ENCODE measurements at regions of chr6 and their contacts with region 1.

Region 1: DNA sequence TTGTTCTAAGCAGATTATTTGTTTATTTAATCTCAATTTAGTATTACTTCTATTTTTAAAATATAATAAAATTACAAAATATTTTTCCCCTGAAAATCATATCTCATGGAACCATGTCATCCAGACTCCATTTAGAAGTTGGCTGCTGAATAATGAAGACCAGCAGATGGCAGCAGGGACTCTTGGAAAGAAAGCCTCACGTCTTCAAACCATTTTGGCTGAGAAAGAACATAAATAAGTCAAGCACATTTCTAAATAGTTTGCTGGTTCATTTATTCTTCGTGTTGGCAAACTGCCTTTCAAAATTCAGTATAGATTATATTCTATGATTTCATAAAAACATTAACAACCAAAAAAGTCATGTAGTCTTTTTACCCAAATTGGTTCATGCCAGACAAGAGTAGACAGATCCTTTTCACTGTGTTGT is 71.7 kb downstream of the RCAN2 start:
- DNase-seq: peak; percentile 8
- ATAC-seq: peak; percentile 60
- H3K4me3 ChIP-seq: no peak overlapping the region
- H3K27ac ChIP-seq: no peak overlapping the region
- H3K4me1 ChIP-seq: no peaks in the 10 kb centered on the region
- H3K27me3 ChIP-seq: no peaks in the 10 kb centered on the region
- CTCF ChIP-seq: peak; percentile 54 to 65 (median 59); a peak in 5 of 6 replicates
- EP300 ChIP-seq: no peak
- POLR2A ChIP-seq: no peak
- RAD21 ChIP-seq: peak; percentile 88

Region 2: GRCh38 chr6:46381579-46381978 is 38.0 kb before region 1 on chr6:
- CTCF ChIA-PET with region 1: no interaction called
- POLR2A ChIA-PET with region 1: no interaction called
- RAD21 ChIA-PET with region 1: no interaction called
- SMC1A ChIA-PET with region 1: no interaction called
- in situ Hi-C with region 1: no loop called
- intact Hi-C with region 1: no loop called
- DNase-seq: no peak
- ATAC-seq: no peak
- H3K4me3 ChIP-seq: no peak overlapping the region
- H3K27ac ChIP-seq: no peak overlapping the region
- H3K4me1 ChIP-seq: peaks cover 14% of the 10 kb centered on the region
- H3K27me3 ChIP-seq: no peaks in the 10 kb centered on the region; a peak in 2 of 4 replicates
- CTCF ChIP-seq: no peak
- EP300 ChIP-seq: no peak
- POLR2A ChIP-seq: no peak
- RAD21 ChIP-seq: no peak

Region 3: DNA sequence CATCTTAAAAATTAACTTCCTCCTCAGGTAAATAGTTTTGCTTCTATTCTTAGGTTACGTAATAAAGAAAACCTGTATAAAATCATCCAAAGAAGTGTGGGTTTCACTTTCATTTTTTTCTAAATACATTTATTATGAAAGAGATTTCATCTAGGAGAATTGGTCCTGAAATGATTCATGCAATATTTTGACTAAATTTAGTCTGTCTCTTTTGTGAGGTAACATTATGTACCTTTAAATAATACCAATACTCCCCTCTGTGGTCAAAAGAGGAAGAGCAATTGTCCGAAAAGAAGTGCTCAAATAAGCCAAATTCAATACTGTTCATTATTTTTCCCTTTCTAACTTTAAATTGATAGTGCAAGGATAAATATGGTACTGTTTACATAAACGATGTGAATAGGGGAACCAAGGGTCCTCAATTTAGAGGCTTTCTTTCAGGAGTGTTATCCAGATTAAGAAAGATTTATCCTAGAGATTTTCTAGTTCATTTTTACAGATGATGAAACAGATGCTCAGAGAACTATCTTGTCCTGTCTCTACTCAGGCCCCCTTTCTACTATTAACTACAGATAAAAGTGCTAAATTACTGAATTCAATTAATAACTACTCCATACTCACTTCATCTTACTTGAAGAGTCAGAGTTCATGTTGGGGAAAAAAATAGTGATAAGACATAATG is 206.8 kb after region 1 on chr6:
- CTCF ChIA-PET with region 1: interaction called, 6 read pairs
- POLR2A ChIA-PET with region 1: no interaction called
- RAD21 ChIA-PET with region 1: interaction called, 4 read pairs
- SMC1A ChIA-PET with region 1: no interaction called
- in situ Hi-C with region 1: no loop called
- intact Hi-C with region 1: loop called (anchors 1 kb)
- DNase-seq: peak; percentile 7
- ATAC-seq: peak; percentile 88
- H3K4me3 ChIP-seq: no peak overlapping the region
- H3K27ac ChIP-seq: no peak overlapping the region
- H3K4me1 ChIP-seq: no peaks in the 10 kb centered on the region
- H3K27me3 ChIP-seq: peaks cover 0 to 2% of the 10 kb centered on the region in 2 experiments; a peak in 1 of 4 replicates
- CTCF ChIP-seq: peak; percentile 40 to 60 (median 57); a peak in 4 of 6 replicates
- EP300 ChIP-seq: no peak
- POLR2A ChIP-seq: no peak
- RAD21 ChIP-seq: peak; percentile 72

Region 4: GRCh38 chr6:46772762-46773161 is 353.2 kb after region 1 on chr6:
- CTCF ChIA-PET with region 1: no interaction called
- POLR2A ChIA-PET with region 1: no interaction called
- RAD21 ChIA-PET with region 1: no interaction called
- SMC1A ChIA-PET with region 1: no interaction called
- in situ Hi-C with region 1: loop called (anchors 10 kb)
- intact Hi-C with region 1: no loop called
- DNase-seq: peak; percentile 9
- ATAC-seq: no peak; the same call in 2 of the 3 replicates
- H3K4me3 ChIP-seq: no peak overlapping the region
- H3K27ac ChIP-seq: no peak overlapping the region
- H3K4me1 ChIP-seq: no peaks in the 10 kb centered on the region
- H3K27me3 ChIP-seq: no peaks in the 10 kb centered on the region
- CTCF ChIP-seq: no peak
- EP300 ChIP-seq: no peak
- POLR2A ChIP-seq: no peak
- RAD21 ChIP-seq: no peak

Region 5: GRCh38 chr6:46781478-46782378 is 362.1 kb after region 1 on chr6:
- CTCF ChIA-PET with region 1: interaction called, 3 read pairs
- POLR2A ChIA-PET with region 1: no interaction called
- RAD21 ChIA-PET with region 1: no interaction called
- SMC1A ChIA-PET with region 1: no interaction called
- in situ Hi-C with region 1: loop called (anchors 10 kb)
- intact Hi-C with region 1: loop called (anchors 5 kb)
- DNase-seq: no peak
- ATAC-seq: peak; percentile 68; the same call in 2 of the 3 replicates
- H3K4me3 ChIP-seq: no peak overlapping the region
- H3K27ac ChIP-seq: no peak overlapping the region
- H3K4me1 ChIP-seq: no peaks in the 10 kb centered on the region
- H3K27me3 ChIP-seq: no peaks in the 10 kb centered on the region
- CTCF ChIP-seq: peak; percentile 53 to 60 (median 56)
- EP300 ChIP-seq: no peak
- POLR2A ChIP-seq: no peak
- RAD21 ChIP-seq: peak; percentile 65

Region 6: GRCh38 chr6:46993846-46994245 is 574.3 kb after region 1 on chr6:
- CTCF ChIA-PET with region 1: interaction called, 3 read pairs
- POLR2A ChIA-PET with region 1: no interaction called
- RAD21 ChIA-PET with region 1: no interaction called
- SMC1A ChIA-PET with region 1: no interaction called
- in situ Hi-C with region 1: no loop called
- intact Hi-C with region 1: loop called (anchors 10 kb)
- DNase-seq: no peak
- ATAC-seq: no peak
- H3K4me3 ChIP-seq: no peak overlapping the region
- H3K27ac ChIP-seq: no peak overlapping the region
- H3K4me1 ChIP-seq: no peaks in the 10 kb centered on the region
- H3K27me3 ChIP-seq: no peaks in the 10 kb centered on the region
- CTCF ChIP-seq: no peak
- EP300 ChIP-seq: no peak
- POLR2A ChIP-seq: no peak
- RAD21 ChIP-seq: no peak

Region 7: GRCh38 chr6:47047479-47048407 is 628.2 kb after region 1 on chr6:
- CTCF ChIA-PET with region 1: interaction called, 3 read pairs
- POLR2A ChIA-PET with region 1: no interaction called
- RAD21 ChIA-PET with region 1: no interaction called
- SMC1A ChIA-PET with region 1: no interaction called
- in situ Hi-C with region 1: no loop called
- intact Hi-C with region 1: loop called (anchors 2 kb)
- DNase-seq: peak; percentile 11
- ATAC-seq: peak; percentile 91
- H3K4me3 ChIP-seq: no peak overlapping the region
- H3K27ac ChIP-seq: no peak overlapping the region
- H3K4me1 ChIP-seq: no peaks in the 10 kb centered on the region
- H3K27me3 ChIP-seq: peaks cover 2 to 3% of the 10 kb centered on the region in 2 experiments; a peak in 3 of 4 replicates
- CTCF ChIP-seq: peak; percentile 64 to 79 (median 76); a peak in 5 of 6 replicates
- EP300 ChIP-seq: no peak
- POLR2A ChIP-seq: no peak
- RAD21 ChIP-seq: peak; percentile 79